ENCODE measurements at regions of chr10 and their contacts with region 1.

Region 1: GRCh38 chr10:91632671-91633550 is at the start of gene PPP1R3C:
- DNase-seq: peak; percentile 93
- H3K4me3 ChIP-seq: peak within 1 kb of the TSS; percentile 71 to 72
- H3K27ac ChIP-seq: peak within 1 kb of the TSS; percentile 69 to 84
- H3K4me1 ChIP-seq: peaks cover 0 to 12% of the 10 kb centered on the region in 2 experiments; a peak in 2 of 4 replicates
- H3K27me3 ChIP-seq: no peaks in the 10 kb centered on the region
- CTCF ChIP-seq: peak; percentile 55
- EP300 ChIP-seq: peak in 1 of 2 experiments; percentile 41; a peak in 2 of 4 replicates
- RAD21 ChIP-seq: peak; percentile 50
- polyA plus RNA-seq, gene PPP1R3C: 9.0 and 11.5 TPM in 2 replicates

Region 2: DNA sequence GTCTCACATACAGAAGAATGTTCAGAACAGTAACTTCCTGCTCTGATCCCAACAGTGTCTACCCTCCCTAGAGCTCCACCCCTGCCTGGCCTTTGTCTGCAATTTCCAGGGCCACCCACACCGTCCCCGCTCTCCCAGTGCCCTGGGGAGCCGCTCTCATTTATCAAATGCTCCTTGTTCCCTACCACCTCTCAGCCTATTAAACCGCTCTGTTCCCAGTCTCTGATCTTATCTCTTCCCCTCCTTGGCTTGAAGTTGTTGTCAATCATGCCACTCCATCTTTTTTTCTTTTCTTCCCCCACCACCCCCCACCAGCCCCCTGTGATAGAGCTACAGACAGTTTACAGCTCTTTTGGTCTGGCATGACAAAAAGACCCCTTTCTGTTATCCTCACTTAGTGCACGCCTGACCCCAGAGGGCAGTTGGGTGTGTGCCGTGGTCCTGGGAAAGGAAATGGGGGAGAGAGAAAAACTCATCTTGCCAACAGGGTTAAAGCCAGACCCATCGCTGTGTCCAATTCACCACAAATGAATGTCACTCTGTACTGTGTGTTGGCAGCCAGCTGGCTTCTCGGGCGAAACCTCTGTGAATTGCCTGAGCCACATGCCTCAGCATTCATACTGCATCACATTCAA is 251.5 kb before region 1 on chr10:
- CTCF ChIA-PET with region 1: interaction called, 23 read pairs
- POLR2A ChIA-PET with region 1: interaction called, 4 read pairs
- DNase-seq: peak; percentile 67
- H3K4me3 ChIP-seq: peak overlapping the region; percentile 13 to 17; a peak in 3 of 4 replicates
- H3K27ac ChIP-seq: peak overlapping the region; percentile 72 to 89
- H3K4me1 ChIP-seq: peaks cover 14 to 33% of the 10 kb centered on the region in 2 experiments; a peak in 3 of 4 replicates
- H3K27me3 ChIP-seq: no peaks in the 10 kb centered on the region
- CTCF ChIP-seq: no peak
- EP300 ChIP-seq: peak; percentile 4 to 40; a peak in 3 of 4 replicates
- RAD21 ChIP-seq: peak; percentile 8; the same call in 1 of the 2 replicates

Region 3: DNA sequence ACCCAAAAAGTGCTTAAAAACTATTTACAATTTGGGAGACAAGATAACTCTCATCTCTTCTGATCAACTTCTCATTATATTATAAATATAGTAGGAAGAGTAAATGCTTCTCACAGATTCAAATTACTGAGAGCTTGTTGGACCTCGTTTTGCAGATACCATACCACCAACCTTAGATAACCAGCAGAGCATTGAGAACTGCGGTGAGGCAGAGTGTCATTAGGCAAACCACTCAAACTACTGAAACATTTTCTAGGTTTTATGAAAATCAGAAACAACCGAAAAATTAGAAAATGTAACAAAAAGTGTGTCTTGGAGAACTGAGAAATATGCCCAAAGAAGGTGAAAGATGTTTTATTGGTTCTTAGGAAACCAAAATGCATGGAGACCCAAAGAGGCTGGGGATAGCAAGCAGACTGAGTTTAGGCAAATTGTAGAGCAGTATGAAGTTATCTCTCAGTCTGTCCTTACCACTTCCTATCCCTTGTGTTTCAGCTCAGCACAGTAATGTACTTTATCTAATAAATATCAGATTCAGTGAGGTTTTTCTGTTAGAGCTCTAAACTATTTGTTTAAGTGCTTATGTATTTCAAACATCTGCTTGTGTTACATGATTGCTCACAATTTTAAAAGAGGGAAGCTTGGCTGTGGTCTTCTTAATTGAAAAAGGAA is 144.9 kb before region 1 on chr10:
- CTCF ChIA-PET with region 1: interaction called, 114 read pairs
- POLR2A ChIA-PET with region 1: no interaction called
- DNase-seq: no peak
- H3K4me3 ChIP-seq: no peak overlapping the region
- H3K27ac ChIP-seq: no peak overlapping the region
- H3K4me1 ChIP-seq: no peaks in the 10 kb centered on the region
- H3K27me3 ChIP-seq: no peaks in the 10 kb centered on the region
- CTCF ChIP-seq: no peak
- EP300 ChIP-seq: no peak
- RAD21 ChIP-seq: no peak

Region 4: DNA sequence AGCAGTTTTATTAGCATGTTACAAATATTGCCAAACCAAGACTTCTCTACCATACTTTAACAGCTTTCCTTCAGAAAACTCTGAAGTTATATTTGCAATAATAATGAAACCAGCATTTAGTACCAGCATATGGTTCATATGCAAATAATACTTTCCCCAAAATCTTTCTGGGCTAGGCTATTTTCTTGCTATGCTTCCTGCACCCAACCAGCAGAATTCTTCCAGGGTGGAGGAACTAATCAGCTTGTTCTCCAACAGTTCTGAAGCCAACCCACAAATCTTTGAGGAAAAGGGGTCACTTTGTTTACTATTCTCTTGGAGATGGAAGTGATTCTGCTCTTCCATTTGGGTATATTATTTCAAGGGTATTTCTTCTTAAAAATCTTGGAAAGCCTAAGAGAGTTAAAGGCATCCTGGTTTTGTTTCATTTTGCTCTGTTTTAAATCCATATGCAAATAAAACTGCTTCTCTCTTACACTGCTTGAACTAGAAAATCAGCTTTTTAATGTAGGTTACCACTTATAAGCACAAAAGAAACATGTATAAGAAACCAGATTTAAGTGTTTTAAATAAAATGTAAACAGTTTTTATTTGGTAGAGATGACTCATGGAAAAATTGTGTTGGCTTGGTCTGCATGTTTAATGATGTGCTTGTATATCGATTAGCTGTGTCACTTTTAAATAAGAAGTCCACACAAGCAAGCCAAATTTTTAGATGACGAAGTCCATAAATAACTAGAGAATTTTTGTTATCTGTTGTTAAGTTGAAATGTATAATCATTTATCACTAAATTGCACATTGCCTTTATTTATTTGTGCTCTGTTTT is 119.1 kb before region 1 on chr10:
- CTCF ChIA-PET with region 1: interaction called, 11 read pairs
- POLR2A ChIA-PET with region 1: no interaction called
- DNase-seq: no peak
- H3K4me3 ChIP-seq: no peak overlapping the region
- H3K27ac ChIP-seq: peak overlapping the region; percentile 30 to 62; a peak in 2 of 4 replicates
- H3K4me1 ChIP-seq: peaks cover 0 to 27% of the 10 kb centered on the region in 2 experiments; a peak in 3 of 4 replicates
- H3K27me3 ChIP-seq: no peaks in the 10 kb centered on the region
- CTCF ChIP-seq: no peak
- EP300 ChIP-seq: no peak
- RAD21 ChIP-seq: no peak

Region 5: DNA sequence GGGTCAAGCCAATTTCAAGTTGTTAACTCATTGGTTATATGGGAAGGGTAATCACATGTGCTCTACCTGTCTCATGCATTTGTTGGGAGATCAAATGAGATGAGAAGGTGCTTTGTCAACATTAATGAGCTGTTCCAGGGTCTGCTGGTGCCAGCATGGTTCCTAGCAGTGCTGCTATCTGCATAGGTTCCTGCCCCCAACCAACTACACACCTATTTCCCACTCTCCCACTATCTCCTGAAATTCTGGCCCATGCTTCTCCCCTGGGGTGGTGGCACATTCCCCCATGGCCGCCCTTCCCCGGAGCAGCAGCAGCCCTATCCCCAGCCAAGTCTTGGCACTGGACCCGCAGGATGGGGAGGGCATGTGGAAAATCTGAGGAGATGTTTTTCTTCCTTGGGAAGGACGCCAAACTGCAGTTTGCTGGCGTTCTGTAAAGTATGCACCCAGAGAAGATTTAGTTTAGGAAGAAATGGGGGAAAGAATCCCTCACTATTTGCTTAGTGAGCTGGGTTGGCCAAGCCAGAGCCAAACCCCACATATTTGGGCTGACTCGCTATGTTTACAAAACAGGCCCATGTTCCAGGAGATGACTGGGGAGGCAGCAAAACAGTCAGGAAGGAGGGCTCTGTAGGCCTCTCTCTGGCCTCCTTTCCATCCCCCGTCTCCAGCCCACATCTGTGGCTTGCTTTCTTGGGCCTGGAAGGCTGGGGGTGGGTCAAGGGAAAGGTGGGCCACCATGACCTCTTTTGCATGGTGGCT is 42.6 kb before region 1 on chr10:
- CTCF ChIA-PET with region 1: interaction called, 51 read pairs
- POLR2A ChIA-PET with region 1: interaction called, 11 read pairs
- DNase-seq: no peak
- H3K4me3 ChIP-seq: no peak overlapping the region
- H3K27ac ChIP-seq: peak overlapping the region; percentile 92 to 97
- H3K4me1 ChIP-seq: peaks cover 50 to 51% of the 10 kb centered on the region in 2 experiments
- H3K27me3 ChIP-seq: no peaks in the 10 kb centered on the region
- CTCF ChIP-seq: no peak
- EP300 ChIP-seq: peak in 1 of 2 experiments; percentile 79; a peak in 2 of 4 replicates
- RAD21 ChIP-seq: no peak

Region 6: GRCh38 chr10:91664426-91664825 is 31.5 kb after region 1 on chr10:
- CTCF ChIA-PET with region 1: interaction called, 13 read pairs
- POLR2A ChIA-PET with region 1: no interaction called
- DNase-seq: no peak
- H3K4me3 ChIP-seq: no peak overlapping the region
- H3K27ac ChIP-seq: no peak overlapping the region
- H3K4me1 ChIP-seq: no peaks in the 10 kb centered on the region
- H3K27me3 ChIP-seq: no peaks in the 10 kb centered on the region
- CTCF ChIP-seq: no peak
- EP300 ChIP-seq: no peak
- RAD21 ChIP-seq: no peak

Region 7: GRCh38 chr10:91983416-91983815 is 350.5 kb after region 1 on chr10:
- CTCF ChIA-PET with region 1: no interaction called
- POLR2A ChIA-PET with region 1: no interaction called
- DNase-seq: no peak
- H3K4me3 ChIP-seq: no peak overlapping the region
- H3K27ac ChIP-seq: no peak overlapping the region; a peak in 1 of 4 replicates
- H3K4me1 ChIP-seq: no peaks in the 10 kb centered on the region
- H3K27me3 ChIP-seq: no peaks in the 10 kb centered on the region
- CTCF ChIP-seq: no peak
- EP300 ChIP-seq: no peak
- RAD21 ChIP-seq: no peak